ENCODE measurements at regions of chr10 and their contacts with region 1.

Region 1: GRCh38 chr10:28381903-28382347 is 79.1 kb upstream of the MPP7 start:
- DNase-seq: peak; percentile 55 to 82 (median 76)
- ATAC-seq: peak; percentile 98
- H3K4me3 ChIP-seq: no peak overlapping the region
- H3K4me3 Mint-ChIP-seq: peak overlapping the region in 4 of 10 donors; percentile 20 to 72 (median 34)
- H3K27ac ChIP-seq: no peak overlapping the region
- H3K27ac Mint-ChIP-seq: peak overlapping the region; percentile 30 to 93 (median 70)
- H3K4me1 ChIP-seq: peaks cover 0 to 20% of the 10 kb centered on the region in 2 donors
- H3K4me1 Mint-ChIP-seq: peaks cover 17 to 49% (median 43%) of the 10 kb centered on the region in 7 donors
- H3K27me3 ChIP-seq: no peaks in the 10 kb centered on the region
- H3K27me3 Mint-ChIP-seq: peaks cover 0 to 11% (median 0%) of the 10 kb centered on the region in 5 donors

Region 2: GRCh38 chr10:27446091-27446918 is 935.6 kb before region 1 on chr10:
- CTCF ChIA-PET with region 1: no interaction called
- POLR2A ChIA-PET with region 1: no interaction called
- intact Hi-C with region 1: loop called in 1 of 2 experiments (anchors 2 kb)
- DNase-seq: peak in 6 of 9 donors; percentile 23 to 58 (median 46)
- ATAC-seq: peak; percentile 65
- H3K4me3 ChIP-seq: no peak overlapping the region
- H3K4me3 Mint-ChIP-seq: peak overlapping the region in 3 of 10 donors; percentile 20 to 53 (median 23)
- H3K27ac ChIP-seq: no peak overlapping the region
- H3K27ac Mint-ChIP-seq: peak overlapping the region in 1 of 9 donors; percentile 32
- H3K4me1 ChIP-seq: no peaks in the 10 kb centered on the region
- H3K4me1 Mint-ChIP-seq: peaks cover 6 to 19% (median 17%) of the 10 kb centered on the region in 7 donors
- H3K27me3 ChIP-seq: no peaks in the 10 kb centered on the region
- H3K27me3 Mint-ChIP-seq: peaks cover 0 to 16% (median 0%) of the 10 kb centered on the region in 5 donors

Region 3: DNA sequence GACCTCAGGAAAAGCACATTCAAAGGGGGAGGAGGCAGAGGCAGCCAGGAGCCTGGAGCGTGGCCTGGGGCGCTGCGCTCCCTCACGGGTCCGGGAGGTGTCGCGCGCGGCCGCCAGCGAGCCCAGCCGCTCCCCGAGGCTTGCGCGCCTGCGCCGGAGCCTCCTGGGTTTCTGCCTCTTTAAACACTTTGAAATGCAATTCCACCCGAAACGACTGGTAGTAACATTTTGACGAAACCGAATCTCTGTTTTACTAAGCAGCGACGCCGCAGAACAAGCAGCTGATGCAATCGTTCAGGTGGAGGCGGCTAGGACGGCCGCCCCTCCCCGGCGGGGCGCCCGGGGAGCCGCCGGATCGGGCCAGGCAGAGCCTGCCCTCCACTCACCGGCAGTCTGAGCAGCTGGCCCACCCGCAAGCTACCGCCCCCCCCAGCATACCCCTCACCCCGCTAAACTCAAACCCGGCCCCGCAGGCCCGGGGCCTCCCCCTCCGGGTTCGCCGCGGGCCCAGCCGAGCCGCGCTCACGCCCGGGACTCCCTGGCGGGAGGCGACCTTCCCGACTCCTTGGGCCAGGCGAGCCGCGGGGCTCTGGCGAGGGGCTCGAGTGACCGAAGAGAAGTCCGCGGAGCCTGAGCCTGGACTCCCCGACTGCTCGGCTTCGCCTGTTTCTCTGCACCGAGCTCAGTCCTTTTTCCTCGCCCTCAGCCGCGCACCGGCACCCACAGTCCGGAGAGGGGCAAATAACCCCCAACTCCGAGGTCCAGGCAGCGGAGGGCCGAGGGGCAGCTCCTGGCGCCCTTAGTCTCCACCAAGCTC is 639.5 kb before region 1 on chr10:
- CTCF ChIA-PET with region 1: interaction called, 5 read pairs
- POLR2A ChIA-PET with region 1: no interaction called
- intact Hi-C with region 1: loop called (anchors 1 kb)
- DNase-seq: peak; percentile 58 to 82 (median 77)
- ATAC-seq: peak; percentile 87
- H3K4me3 ChIP-seq: peak overlapping the region; percentile 73
- H3K4me3 Mint-ChIP-seq: peak overlapping the region; percentile 70 to 96 (median 86)
- H3K27ac ChIP-seq: no peak overlapping the region
- H3K27ac Mint-ChIP-seq: peak overlapping the region in 1 of 9 donors; percentile 20
- H3K4me1 ChIP-seq: peaks cover 27 to 42% of the 10 kb centered on the region in 2 donors
- H3K4me1 Mint-ChIP-seq: peaks cover 23 to 44% (median 29%) of the 10 kb centered on the region in 7 donors
- H3K27me3 ChIP-seq: peaks cover 16 to 55% of the 10 kb centered on the region in 2 donors
- H3K27me3 Mint-ChIP-seq: peaks cover 51 to 82% (median 65%) of the 10 kb centered on the region in 5 donors

Region 4: DNA sequence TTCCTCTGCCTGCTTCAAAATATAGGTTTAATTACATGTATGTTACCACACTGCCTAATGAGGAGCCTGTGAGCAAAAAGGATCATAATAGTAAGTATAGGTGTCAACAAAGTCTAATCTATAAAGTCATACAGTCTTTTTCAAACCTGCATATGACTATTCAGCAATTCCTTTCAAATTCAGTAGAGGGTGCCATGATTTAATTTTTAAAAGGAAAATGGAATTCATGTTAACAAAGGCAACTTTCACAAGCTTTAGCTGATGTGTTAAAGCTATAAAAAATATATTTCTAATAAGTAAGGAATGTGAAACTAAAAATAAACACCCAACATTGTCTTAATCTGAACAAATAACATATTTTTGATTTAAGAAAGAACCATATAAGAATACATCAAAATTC is 131.1 kb before region 1 on chr10:
- CTCF ChIA-PET with region 1: interaction called, 62 read pairs
- POLR2A ChIA-PET with region 1: interaction called, 10 read pairs
- intact Hi-C with region 1: loop called (anchors 1 kb)
- DNase-seq: peak in 5 of 9 donors; percentile 24 to 47 (median 43)
- ATAC-seq: peak; percentile 57
- H3K4me3 ChIP-seq: no peak overlapping the region
- H3K4me3 Mint-ChIP-seq: no peak overlapping the region
- H3K27ac ChIP-seq: no peak overlapping the region
- H3K27ac Mint-ChIP-seq: peak overlapping the region in 5 of 9 donors; percentile 3 to 80 (median 29)
- H3K4me1 ChIP-seq: no peaks in the 10 kb centered on the region
- H3K4me1 Mint-ChIP-seq: peaks cover 10 to 72% (median 50%) of the 10 kb centered on the region in 7 donors
- H3K27me3 ChIP-seq: no peaks in the 10 kb centered on the region
- H3K27me3 Mint-ChIP-seq: peaks cover 0 to 8% (median 0%) of the 10 kb centered on the region in 5 donors

Region 5: DNA sequence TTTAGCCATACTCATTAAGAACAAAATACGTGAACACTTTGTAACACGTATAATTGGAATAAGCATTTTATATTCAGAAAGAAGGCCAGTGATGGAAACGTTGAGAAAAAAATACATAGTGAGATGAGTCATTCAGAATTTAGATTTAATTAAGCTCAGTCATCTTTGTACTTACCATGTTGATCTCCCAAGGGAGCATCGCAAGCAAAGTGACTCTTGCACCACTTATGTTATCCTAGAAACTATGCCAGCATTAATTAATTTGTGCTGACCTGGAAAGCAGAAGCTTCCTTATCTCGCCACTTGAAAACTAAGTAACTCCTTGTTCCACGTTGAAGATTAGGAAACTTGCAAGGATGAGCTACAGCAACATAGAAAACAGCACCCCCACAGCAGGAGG is 69.4 kb before region 1 on chr10:
- CTCF ChIA-PET with region 1: interaction called, 12 read pairs
- POLR2A ChIA-PET with region 1: no interaction called
- intact Hi-C with region 1: no loop called
- DNase-seq: no peak
- ATAC-seq: no peak
- H3K4me3 ChIP-seq: no peak overlapping the region
- H3K4me3 Mint-ChIP-seq: no peak overlapping the region
- H3K27ac ChIP-seq: no peak overlapping the region
- H3K27ac Mint-ChIP-seq: peak overlapping the region in 1 of 9 donors; percentile 36
- H3K4me1 ChIP-seq: peaks cover 0 to 8% of the 10 kb centered on the region in 2 donors
- H3K4me1 Mint-ChIP-seq: peaks cover 4 to 51% (median 19%) of the 10 kb centered on the region in 7 donors
- H3K27me3 ChIP-seq: no peaks in the 10 kb centered on the region
- H3K27me3 Mint-ChIP-seq: peaks cover 0 to 22% (median 0%) of the 10 kb centered on the region in 5 donors

Region 6: DNA sequence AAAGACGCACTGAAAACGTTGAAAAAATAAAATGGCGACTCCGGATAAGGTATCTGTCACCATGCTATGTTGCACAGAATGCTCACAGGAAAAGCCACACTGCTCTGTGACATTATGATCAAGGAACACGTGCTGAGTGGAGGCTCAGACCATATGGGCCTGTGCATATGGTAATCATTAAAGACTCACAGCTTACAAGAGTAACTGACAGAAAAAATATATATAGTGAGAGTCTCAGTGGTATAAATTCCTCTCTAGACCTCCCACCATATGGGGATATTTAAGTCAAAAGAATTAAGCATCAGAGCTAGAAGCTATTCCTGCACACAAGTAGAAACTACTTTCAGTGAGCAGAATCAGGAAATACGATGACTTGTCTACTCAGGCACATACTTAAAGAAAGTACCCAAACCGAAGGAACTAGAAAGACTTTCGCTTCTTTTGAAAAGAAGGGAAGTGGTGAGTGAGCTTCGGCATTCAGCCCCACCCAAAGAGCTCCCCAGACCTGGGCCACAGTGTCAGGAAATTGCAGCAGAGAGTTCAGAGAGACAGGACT is 13.9 kb before region 1 on chr10:
- CTCF ChIA-PET with region 1: interaction called, 42 read pairs
- POLR2A ChIA-PET with region 1: interaction called, 63 read pairs
- intact Hi-C with region 1: loop called (anchors 1 kb)
- DNase-seq: peak in 8 of 9 donors; percentile 54 to 88 (median 83)
- ATAC-seq: peak; percentile 97
- H3K4me3 ChIP-seq: peak overlapping the region; percentile 18
- H3K4me3 Mint-ChIP-seq: peak overlapping the region; percentile 63 to 93 (median 76)
- H3K27ac ChIP-seq: peak overlapping the region; percentile 78
- H3K27ac Mint-ChIP-seq: peak overlapping the region; percentile 90 to 99 (median 96)
- H3K4me1 ChIP-seq: peaks cover 44 to 54% of the 10 kb centered on the region in 2 donors
- H3K4me1 Mint-ChIP-seq: peaks cover 39 to 80% (median 60%) of the 10 kb centered on the region in 7 donors
- H3K27me3 ChIP-seq: no peaks in the 10 kb centered on the region
- H3K27me3 Mint-ChIP-seq: peaks cover 0 to 5% (median 0%) of the 10 kb centered on the region in 5 donors